Cardiac septum (tissue), 1 donor: ENCODE measurements at regions of chr14 and their contacts with region 1.

Region 1: DNA sequence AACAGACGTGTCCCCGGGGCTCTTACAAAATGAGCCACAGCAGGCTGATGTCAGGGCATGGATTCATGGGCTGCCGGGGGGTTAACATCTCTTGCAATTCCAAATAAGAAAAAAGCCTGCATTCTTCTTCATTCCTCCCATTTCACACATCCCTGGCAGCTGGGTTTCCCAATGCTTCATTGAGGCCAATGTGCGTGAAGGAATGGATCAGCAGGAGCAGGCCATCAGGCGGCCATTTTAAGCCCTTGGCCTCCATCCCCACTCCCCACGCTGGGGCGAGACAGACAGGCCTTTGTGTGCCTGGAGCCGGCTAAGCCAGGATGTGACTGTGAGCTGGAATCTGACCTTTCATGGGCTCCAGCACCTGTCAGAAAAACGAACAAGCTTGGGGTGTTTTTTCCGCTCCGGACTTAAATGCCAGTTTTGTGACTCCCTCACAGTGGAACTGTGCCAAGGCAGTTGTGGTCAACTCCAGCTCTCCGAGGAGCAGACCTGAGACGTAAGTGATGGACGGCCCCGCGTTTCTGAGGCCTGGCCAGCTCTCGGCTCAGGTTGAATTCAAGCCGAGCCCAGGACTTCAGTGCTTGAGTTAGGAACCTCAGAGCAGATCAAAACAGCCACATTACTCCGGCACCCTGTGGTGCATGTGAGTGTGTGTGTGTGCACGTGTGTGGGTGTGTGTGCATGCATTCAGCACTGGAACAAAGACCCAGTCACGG is 133.1 kb downstream of the TMEM30B start:
- DNase-seq: no peak

Region 2: DNA sequence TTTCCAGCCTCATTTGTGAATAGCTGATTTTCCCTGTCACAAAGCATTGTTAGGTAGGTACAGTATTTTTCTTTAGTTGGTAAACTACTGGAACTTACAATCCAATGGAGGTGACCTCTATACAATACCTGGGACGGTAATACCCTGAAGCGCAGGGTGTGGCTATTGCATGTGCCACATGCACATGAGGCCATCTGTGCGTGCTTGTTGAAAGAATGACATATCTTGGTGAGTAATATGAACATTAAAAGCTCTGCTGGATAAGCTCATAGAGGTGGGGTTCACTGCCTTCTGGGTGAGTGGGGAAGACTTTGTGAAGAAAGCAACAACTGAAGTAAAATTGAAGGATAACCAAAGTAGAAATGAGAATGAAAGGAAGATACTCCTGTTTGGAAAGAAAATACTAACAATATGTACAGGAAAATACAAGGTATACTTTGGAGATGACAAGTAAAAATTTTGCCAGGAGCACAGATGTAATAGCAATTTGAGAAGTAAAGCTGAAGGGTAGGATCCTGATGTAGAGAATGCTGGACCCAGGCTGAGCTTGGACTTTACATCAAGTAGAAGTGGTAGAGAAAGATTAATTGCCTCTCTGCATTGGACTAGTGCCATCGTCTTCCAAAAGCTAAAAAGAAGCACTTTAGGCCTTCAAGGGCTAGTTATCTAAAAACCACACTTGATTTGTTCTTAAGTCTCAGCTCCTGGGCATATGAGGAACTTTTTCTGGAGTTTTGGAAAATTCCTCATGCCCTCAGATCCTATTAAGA is 69.9 kb before region 1 on chr14:
- intact Hi-C with region 1: loop called (anchors 2 kb)
- DNase-seq: no peak

Region 3: DNA sequence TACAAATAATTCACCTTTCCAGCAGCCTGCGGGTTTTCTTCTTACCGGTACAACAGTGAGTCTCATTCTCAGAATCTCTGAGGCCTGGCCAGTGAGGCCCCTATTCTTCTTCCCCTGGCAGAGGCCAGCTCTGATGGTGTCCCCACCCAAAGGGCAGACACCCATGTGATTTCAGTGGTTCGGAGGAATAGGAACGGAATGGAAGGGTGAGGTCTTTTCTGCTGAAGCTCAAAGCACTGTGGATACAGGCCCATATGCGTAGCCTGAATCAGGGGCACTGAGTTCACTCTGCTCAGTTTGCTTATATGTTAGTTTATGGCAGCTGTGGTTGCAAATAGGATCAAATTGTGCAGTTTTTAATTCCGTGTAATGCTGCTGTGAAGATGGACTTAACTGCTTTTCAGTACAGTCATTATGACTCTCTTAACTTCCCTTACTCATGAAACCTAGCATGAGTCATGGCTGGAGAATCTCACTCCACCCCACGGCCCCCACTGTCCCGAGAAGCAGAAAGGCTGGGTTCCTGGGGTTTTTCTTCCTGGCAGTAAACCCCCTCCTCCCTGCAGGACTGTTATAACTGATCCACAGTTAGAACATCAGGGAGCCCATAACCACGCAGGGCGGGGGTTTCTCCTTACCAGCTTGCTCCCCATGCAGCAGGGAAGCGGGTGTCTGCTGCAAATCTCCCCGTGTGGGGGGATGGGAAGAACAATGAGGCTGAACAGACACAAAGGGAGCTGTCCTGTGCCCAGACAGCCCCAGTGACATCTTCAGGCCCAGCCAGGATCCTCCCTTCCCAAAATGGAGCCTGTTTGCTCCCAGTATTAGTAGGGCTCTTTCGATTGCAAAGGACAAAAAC is 44.3 kb before region 1 on chr14:
- intact Hi-C with region 1: loop called (anchors 5 kb)
- DNase-seq: no peak

Region 4: GRCh38 chr14:61178226-61179060 is 30.5 kb after region 1 on chr14:
- intact Hi-C with region 1: no loop called
- DNase-seq: no peak

Region 5: DNA sequence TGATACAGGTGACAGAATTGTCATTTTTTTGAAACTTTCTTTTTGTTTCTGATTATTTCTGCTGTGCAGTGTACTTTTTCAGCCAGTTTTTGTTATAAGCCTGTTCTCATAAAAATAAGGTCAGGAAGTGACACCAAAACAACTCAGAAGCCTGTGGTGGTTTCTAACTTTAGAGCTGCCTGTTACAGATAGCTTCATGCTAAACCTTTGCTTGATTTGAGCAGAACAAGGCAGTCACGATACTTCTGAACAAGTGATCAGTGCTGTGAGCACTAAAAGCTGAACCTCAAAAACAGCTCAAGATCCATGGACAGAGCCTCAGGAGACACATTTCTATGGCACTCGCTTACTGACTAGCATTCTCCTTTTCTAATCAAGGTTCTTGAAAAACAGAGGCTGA is 255.4 kb after region 1 on chr14:
- intact Hi-C with region 1: no loop called
- DNase-seq: no peak